Kidney (tissue), 22 donors: ENCODE measurements at regions of chr6 and their contacts with region 1.

Region 1: DNA sequence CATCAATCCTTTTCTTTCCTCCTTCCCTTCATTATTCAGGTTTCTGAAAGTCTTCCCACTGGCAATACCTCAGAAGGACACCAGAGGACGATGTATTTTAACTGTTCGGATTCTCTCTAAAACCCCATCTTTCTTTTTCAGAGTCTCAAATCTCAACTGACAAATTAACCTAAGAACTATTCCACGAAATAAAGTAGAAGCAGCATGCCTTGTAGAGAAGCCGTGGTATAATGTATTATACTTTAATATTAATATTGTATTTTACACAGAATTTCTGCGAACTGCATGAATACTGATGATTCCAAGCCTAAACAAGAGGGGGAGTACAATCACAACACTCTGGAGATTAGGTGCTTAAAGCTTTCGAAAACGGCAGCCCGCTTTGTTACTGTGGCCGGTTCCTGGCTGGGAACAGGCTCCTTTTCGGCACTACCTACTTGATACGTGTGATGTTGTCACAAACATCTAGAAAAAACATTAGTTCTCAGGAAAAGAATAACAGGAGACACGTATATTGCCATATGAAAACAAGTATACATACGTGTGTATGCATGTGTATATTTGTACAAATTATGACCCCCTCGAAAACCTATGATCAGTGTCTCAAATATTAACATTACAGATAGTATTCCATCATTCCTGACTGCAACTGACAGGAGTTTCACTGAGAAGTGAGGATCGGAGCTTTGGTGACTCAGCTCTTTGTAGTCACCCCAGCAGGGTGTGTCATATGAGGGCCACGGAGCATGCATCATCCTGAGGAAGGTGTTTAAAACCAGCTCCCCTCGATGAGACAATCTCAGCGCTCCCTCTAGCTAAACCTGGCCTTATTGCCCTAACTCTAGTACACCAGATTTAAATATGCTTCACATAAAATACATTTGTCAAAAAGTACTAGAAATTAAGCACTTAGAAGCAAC is 319.7 kb upstream of the TCF21 start:
- DNase-seq: peak in 3 of 5 donors; percentile 46 to 89 (median 89)
- H3K4me3 ChIP-seq: peak overlapping the region; percentile 26 to 55 (median 52)
- H3K27ac ChIP-seq: no peak overlapping the region
- H3K4me1 ChIP-seq: peaks cover 0 to 4% (median 2%) of the 10 kb centered on the region in 3 donors
- H3K27me3 ChIP-seq: no peaks in the 10 kb centered on the region
- CTCF ChIP-seq: peak; percentile 85

Region 2: DNA sequence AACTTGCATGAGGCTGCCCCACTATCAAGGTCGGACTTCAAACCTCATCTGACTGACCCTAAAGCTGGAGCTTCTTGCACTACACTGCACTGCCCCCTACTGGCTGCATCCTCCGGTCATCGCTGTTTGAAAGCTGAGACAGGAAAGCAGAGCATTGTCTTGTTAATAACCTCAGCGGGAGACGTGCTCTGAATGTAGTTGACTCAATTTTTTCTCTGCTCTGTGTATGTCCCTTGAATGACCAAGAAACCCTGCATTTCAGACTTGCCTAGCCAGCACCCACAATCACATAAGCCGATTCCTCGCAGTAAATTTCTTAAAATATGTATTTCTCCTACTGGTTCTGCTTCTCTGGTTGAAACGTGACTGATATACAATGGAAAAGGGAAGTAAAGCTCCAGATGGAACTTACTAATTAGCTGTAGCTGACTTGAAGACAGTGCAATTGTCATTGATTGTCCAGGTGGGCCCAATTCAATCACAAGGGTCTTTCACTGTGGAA is 347.5 kb after region 1 on chr6:
- intact Hi-C with region 1: loop called (anchors 10 kb)
- DNase-seq: peak; percentile 93 to 95 (median 94)
- H3K4me3 ChIP-seq: peak overlapping the region in 1 of 3 donors; percentile 34
- H3K27ac ChIP-seq: no peak overlapping the region
- H3K4me1 ChIP-seq: no peaks in the 10 kb centered on the region
- H3K27me3 ChIP-seq: no peaks in the 10 kb centered on the region
- CTCF ChIP-seq: peak; percentile 94